Activated naive CD4-positive, alpha-beta T cell treated with anti-CD3 and anti-CD28 coated beads, Interleukin-2, amount 10 ng/mL, durations not matched to agents 7 days and 5 days (primary cell): ENCODE measurements at regions of chr9 and their contacts with region 1.

Region 1: DNA sequence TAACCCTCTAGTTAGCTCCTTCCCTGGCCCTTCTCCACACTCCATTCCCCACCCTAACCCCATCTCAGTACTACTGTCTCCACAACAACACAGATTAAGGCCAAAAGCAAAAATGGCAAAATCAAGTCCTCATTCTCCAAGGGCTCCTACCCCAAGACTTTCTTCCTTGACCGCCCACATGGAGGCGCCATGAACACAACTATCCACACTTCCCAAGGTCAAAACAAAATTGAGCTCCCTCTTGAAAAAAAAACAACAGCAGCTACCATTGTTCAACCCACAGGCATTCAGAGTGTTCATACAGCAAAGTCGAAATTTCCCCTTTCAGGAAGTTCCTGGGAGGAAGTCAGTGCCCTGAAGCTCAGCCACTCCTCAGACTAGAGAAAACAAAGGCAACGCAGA is 54.4 kb downstream of the GNAQ start:
- DNase-seq: peak; percentile 75
- H3K4me3 Mint-ChIP-seq: no peak overlapping the region
- H3K27ac Mint-ChIP-seq: peak overlapping the region; percentile 26
- H3K4me1 Mint-ChIP-seq: peaks cover 54% of the 10 kb centered on the region
- H3K27me3 Mint-ChIP-seq: no peaks in the 10 kb centered on the region

Region 2: GRCh38 chr9:77663754-77664153 is 313.5 kb before region 1 on chr9:
- CTCF ChIA-PET with region 1: no interaction called
- DNase-seq: no peak
- H3K4me3 Mint-ChIP-seq: no peak overlapping the region
- H3K27ac Mint-ChIP-seq: no peak overlapping the region
- H3K4me1 Mint-ChIP-seq: no peaks in the 10 kb centered on the region
- H3K27me3 Mint-ChIP-seq: peaks cover 19% of the 10 kb centered on the region

Region 3: DNA sequence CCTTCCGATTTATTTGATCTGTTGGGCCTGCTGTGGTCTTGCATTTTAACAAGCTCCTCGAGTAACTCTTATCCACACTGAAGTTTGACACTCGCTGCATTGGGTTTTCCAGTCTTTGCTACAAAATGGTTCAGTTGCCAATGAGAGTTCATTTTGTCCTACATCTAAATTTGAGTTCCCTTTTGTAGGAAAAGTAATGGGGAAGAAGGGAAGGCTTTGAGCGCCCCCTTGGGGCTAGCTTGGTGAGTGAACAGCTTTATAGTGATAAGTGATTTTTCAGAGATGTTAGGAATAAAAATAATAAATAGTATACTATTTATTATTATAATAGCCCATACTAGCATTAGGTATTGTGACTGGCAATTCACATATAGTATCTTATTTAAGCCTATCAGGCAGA is 144.3 kb after region 1 on chr9:
- CTCF ChIA-PET with region 1: interaction called, 78 read pairs
- DNase-seq: peak; percentile 67
- H3K4me3 Mint-ChIP-seq: no peak overlapping the region
- H3K27ac Mint-ChIP-seq: no peak overlapping the region
- H3K4me1 Mint-ChIP-seq: peaks cover 38% of the 10 kb centered on the region
- H3K27me3 Mint-ChIP-seq: peaks cover 13% of the 10 kb centered on the region